ENCODE measurements at regions of chr2 and their contacts with region 1.

Region 1: GRCh38 chr2:144430722-144431391 is 89.1 kb downstream of the ZEB2 start:
- DNase-seq: no peak
- H3K4me3 ChIP-seq: no peak overlapping the region
- H3K27ac ChIP-seq: no peak overlapping the region
- H3K4me1 ChIP-seq: no peaks in the 10 kb centered on the region
- H3K27me3 ChIP-seq: no peaks in the 10 kb centered on the region
- CTCF ChIP-seq: no peak

Region 2: GRCh38 chr2:145702307-145702706 is 1271.5 kb after region 1 on chr2:
- CTCF ChIA-PET with region 1: no interaction called
- POLR2A ChIA-PET with region 1: interaction called, 14 read pairs
- intact Hi-C with region 1: no loop called
- DNase-seq: no peak
- H3K4me3 ChIP-seq: no peak overlapping the region
- H3K27ac ChIP-seq: no peak overlapping the region
- H3K4me1 ChIP-seq: no peaks in the 10 kb centered on the region
- H3K27me3 ChIP-seq: no peaks in the 10 kb centered on the region
- CTCF ChIP-seq: no peak